HepG2 (cell line): ENCODE measurements at regions of chr5 and their contacts with region 1.

Region 1: DNA sequence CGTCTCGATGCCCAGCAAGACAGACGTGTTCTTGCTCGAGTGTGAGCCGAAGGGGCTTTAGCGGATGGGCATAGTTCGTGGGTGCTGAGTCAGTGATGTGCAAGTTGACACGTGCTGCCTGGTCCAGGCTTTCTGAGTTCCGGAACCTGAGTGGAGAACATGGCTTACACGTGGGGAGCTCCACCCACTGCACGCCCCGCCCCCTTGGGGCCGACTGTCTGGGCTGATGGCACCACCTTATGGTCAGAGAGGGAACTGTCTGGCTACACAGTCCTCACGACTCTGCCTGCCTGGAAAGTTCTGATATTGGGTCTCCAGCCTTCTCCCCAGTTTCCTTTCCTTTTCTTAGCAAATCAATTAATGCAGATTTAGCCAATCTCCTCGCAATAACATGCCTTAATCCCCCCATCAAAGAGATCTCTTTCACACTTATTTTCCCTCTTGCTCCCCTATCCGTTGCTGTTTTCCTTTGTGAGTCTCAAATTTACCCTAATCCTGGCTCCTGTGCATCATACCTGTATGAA is 3.8 kb upstream of the STC2 start:
- DNase-seq: peak; percentile 74
- ATAC-seq: peak; percentile 20
- H3K4me3 ChIP-seq: no peak overlapping the region
- H3K27ac ChIP-seq: no peak overlapping the region
- H3K4me1 ChIP-seq: peaks cover 27% of the 10 kb centered on the region
- H3K27me3 ChIP-seq: no peaks in the 10 kb centered on the region; a peak in 1 of 5 replicates
- CTCF ChIP-seq: peak; percentile 99
- EP300 ChIP-seq: no peak
- POLR2A ChIP-seq: no peak
- RAD21 ChIP-seq: peak; percentile 98

Region 2: GRCh38 chr5:172951791-172952511 is 380.1 kb before region 1 on chr5:
- CTCF ChIA-PET with region 1: no interaction called
- POLR2A ChIA-PET with region 1: no interaction called
- in situ Hi-C with region 1: no loop called
- intact Hi-C with region 1: no loop called
- DNase-seq: no peak
- ATAC-seq: no peak
- H3K4me3 ChIP-seq: no peak overlapping the region
- H3K27ac ChIP-seq: no peak overlapping the region
- H3K4me1 ChIP-seq: no peaks in the 10 kb centered on the region
- H3K27me3 ChIP-seq: no peaks in the 10 kb centered on the region
- CTCF ChIP-seq: no peak
- EP300 ChIP-seq: no peak
- POLR2A ChIP-seq: no peak
- RAD21 ChIP-seq: no peak

Region 3: DNA sequence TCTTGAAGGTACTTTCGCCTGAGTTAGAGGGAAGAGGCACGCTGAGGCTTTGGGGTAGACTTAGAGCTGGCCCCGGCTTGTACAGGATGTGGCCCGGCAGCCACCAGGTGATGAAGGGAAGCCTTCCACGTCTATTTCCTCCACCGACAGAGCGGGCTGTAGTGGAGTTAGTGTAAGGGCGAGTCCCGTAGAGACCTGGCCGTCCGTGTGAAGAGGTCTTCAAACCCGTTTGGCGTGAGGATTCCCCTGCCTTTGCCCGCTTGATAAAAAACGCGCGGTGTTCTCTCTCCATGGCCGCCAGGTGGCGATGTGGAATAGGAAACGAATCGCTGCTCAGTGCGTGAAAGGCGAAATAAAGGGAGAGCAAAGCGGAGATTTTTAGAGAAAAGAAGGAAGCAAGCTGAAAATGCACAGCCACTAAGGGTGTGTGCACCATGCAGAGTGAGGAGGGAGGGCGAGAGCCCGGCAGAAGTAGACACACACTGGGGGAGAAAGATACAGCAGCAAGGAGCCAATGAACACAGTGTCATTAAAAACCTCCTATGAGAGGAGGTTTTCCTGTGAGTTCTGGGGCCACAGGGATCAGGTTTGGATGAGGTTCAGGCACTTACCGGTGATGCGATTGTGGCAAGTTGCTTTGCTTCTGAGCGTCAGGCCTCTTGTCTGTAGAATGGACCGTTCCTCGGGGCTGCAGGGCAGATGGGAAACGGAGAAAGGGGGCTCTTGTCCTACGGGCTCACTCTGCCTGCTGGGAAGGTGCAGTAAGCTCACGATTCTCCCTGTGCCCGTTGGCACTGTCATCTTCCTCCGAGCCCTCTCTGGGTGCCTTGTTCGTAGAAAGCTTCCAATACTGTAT is 38.0 kb before region 1 on chr5:
- CTCF ChIA-PET with region 1: interaction called, 90 read pairs
- POLR2A ChIA-PET with region 1: interaction called, 513 read pairs
- in situ Hi-C with region 1: loop called (anchors 5 kb)
- intact Hi-C with region 1: loop called (anchors 1 kb)
- DNase-seq: peak; percentile 78
- ATAC-seq: peak; percentile 45
- H3K4me3 ChIP-seq: peak overlapping the region; percentile 48 to 76 (median 58)
- H3K27ac ChIP-seq: no peak overlapping the region
- H3K4me1 ChIP-seq: peaks cover 88% of the 10 kb centered on the region
- H3K27me3 ChIP-seq: no peaks in the 10 kb centered on the region; a peak in 1 of 5 replicates
- CTCF ChIP-seq: peak; percentile 95
- EP300 ChIP-seq: no peak
- POLR2A ChIP-seq: no peak
- RAD21 ChIP-seq: peak; percentile 92

Region 4: DNA sequence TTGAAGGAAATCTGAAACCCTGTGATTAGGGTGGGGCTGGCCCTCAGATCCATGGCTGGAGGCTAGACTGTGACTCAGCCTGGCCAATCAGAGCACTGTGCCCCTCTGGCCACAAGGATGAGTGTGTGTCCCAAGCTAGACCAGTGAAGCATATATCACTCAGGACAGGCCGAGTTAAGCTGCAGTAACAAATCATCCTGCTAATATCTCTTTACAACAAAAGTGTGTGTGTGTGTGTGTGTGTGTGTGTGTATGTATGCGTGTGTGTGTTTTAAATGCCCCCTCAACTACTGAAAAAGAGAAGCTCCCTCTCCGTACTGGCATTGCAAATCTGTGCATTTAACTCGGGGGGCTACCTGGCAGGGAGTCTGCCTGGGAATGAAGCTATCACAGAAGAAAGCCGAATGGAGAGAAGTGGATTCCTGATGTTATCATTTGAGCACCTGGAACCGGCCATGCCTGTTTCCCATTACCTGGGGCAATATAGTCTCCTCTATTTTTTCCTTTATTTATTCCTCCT is 29.4 kb before region 1 on chr5:
- CTCF ChIA-PET with region 1: interaction called, 9 read pairs
- POLR2A ChIA-PET with region 1: interaction called, 513 read pairs
- in situ Hi-C with region 1: no loop called
- intact Hi-C with region 1: no loop called
- DNase-seq: peak; percentile 44
- ATAC-seq: peak; percentile 48
- H3K4me3 ChIP-seq: peak overlapping the region in 2 of 3 experiments; percentile 27 to 68; a peak in 4 of 6 replicates
- H3K27ac ChIP-seq: peak overlapping the region; percentile 60
- H3K4me1 ChIP-seq: peaks cover 79% of the 10 kb centered on the region
- H3K27me3 ChIP-seq: no peaks in the 10 kb centered on the region
- CTCF ChIP-seq: no peak
- EP300 ChIP-seq: no peak
- POLR2A ChIP-seq: no peak
- RAD21 ChIP-seq: no peak

Region 5: GRCh38 chr5:173315495-173316350 is 16.3 kb before region 1 on chr5:
- CTCF ChIA-PET with region 1: no interaction called
- POLR2A ChIA-PET with region 1: interaction called, 86 read pairs
- in situ Hi-C with region 1: no loop called
- intact Hi-C with region 1: no loop called
- DNase-seq: no peak
- ATAC-seq: no peak
- H3K4me3 ChIP-seq: no peak overlapping the region
- H3K27ac ChIP-seq: peak overlapping the region; percentile 28
- H3K4me1 ChIP-seq: peaks cover 36% of the 10 kb centered on the region
- H3K27me3 ChIP-seq: no peaks in the 10 kb centered on the region
- CTCF ChIP-seq: no peak
- EP300 ChIP-seq: no peak
- POLR2A ChIP-seq: peak in 1 of 2 experiments; percentile 73; a peak in 2 of 4 replicates
- RAD21 ChIP-seq: no peak